ENCODE measurements at regions of chr14 and their contacts with region 1.

Region 1: GRCh38 chr14:58072288-58073071 is 79.5 kb downstream of the ARMH4 start:
- DNase-seq: no peak
- H3K4me3 ChIP-seq: no peak overlapping the region
- CTCF ChIP-seq: no peak
- POLR2A ChIP-seq: no peak

Region 2: DNA sequence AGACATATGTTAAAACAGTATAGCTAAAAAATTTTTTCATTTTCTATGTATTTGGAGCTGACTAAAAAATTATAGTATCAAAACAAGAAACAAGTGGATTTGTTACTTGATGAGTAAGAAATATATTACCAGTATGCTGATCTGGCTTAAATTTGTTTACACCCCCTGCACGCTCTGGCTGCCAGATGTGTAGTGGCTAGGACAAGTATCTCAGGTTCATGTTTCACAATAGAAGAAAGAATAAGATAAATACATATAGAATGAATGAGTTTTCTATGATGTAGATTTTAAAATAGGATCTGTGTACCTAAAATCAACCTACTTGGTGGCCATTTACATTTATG is 669.0 kb before region 1 on chr14:
- intact Hi-C with region 1: no loop called
- DNase-seq: no peak
- H3K4me3 ChIP-seq: no peak overlapping the region
- CTCF ChIP-seq: no peak
- POLR2A ChIP-seq: no peak

Region 3: GRCh38 chr14:57486767-57487379 is 585.6 kb before region 1 on chr14:
- intact Hi-C with region 1: loop called (anchors 10 kb)
- DNase-seq: no peak
- H3K4me3 ChIP-seq: no peak overlapping the region
- CTCF ChIP-seq: no peak
- POLR2A ChIP-seq: no peak

Measured in lower leg skin (tissue), 4 donors.